Mammary epithelial cell (primary cell): ENCODE measurements at regions of chr2 and their contacts with region 1.

Region 1: DNA sequence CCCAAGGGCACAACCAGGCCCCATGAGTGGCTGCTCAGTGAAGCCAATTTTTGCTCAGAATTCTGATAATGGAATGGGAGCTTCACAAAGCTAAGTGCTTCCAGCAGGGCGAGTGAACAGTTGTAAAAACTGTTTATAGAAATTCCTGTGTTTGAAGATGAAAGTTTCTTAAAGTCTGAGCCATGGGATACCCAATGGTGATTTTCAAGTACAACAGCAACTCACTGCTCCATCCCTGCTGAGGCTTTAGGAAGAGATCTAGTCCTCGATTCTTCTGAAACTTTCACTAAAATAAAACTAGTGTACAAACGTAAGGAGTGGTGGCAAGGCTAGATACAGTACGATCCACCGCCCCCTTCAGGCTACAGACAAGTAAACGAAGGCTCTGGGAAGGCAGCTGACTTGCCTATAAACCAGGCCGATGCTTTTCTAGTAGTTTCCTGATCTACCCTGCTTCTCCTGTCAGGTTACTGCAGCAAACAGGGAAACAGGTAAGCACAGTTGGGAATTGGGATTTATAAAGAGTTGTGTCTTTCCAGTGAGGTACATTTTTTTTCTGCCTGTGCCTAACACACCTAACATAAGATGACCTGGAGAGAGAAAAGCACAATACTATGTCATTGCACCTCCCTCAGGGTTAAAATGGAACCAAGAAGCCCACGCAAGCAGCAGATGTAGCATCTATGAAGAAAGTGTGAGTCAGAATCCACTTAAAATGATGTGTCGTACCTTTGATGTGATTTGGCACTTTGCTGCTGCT is 108.7 kb downstream of the UXS1 start:
- DNase-seq: peak; percentile 25
- H3K4me3 ChIP-seq: no peak overlapping the region
- H3K27ac ChIP-seq: no peak overlapping the region
- H3K4me1 ChIP-seq: peaks cover 5% of the 10 kb centered on the region
- H3K27me3 ChIP-seq: no peaks in the 10 kb centered on the region
- CTCF ChIP-seq: peak in 1 of 2 donors; percentile 36

Region 2: DNA sequence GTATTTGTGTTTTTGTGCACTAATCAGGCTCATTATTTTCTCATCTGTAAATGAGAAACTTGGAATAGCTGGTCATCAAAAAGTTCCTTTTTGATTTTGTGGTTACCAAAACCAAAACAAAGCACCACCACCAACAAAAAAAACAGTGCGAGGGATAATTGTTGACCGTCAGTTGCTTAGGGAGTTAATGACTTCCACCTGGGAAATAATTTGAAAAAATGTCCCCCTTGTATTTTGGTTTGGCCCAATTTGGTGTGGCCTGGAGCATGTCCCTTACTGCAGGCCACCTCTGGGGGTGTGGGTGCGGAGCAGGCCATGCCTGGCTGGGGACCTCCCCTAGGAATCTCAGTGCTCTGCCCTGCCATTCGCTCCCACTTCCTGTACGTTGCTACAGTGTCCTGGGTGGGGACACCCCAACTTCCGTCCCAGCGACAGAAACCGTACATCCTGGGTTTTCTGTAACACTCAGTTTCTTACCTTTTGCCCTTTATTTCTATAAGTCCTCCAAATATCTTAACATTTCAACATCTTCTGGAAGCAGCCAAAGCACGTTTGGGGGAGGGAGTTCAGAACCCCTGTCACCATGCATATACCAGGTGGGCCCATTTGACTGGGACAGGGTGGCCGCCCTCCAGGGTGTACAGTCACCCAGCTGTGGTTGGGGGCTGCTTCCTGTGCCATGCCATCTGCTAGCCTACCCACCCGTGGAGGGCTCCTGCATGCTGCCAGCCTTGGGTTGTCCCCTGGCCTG is 309.4 kb before region 1 on chr2:
- CTCF ChIA-PET with region 1: no interaction called
- dilution Hi-C with region 1: no loop called
- in situ Hi-C with region 1: no loop called
- intact Hi-C with region 1: loop called (anchors 10 kb)
- DNase-seq: no peak
- H3K4me3 ChIP-seq: no peak overlapping the region
- H3K27ac ChIP-seq: no peak overlapping the region
- H3K4me1 ChIP-seq: peaks cover 4% of the 10 kb centered on the region
- H3K27me3 ChIP-seq: no peaks in the 10 kb centered on the region
- CTCF ChIP-seq: no peak

Region 3: DNA sequence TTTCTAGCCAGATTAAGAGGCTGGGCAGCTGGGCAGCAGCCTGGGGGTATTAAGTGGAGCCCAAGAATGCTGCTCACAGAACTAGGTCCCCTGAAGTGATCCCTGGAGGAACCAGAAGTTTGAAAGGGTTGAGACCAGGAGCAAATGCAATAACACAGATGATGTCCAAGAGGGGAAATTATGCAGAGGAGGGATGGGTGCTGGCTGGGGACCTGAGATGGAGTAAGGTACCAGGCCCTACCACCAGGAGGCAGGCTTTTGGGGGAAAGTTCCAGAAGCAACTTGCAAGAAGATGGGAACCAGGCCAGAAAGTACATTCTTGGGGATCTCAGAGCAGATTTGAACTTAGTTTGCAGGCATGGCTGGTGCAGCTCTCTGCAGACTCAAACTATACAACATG is 165.5 kb before region 1 on chr2:
- CTCF ChIA-PET with region 1: no interaction called
- dilution Hi-C with region 1: no loop called
- in situ Hi-C with region 1: no loop called
- intact Hi-C with region 1: loop called (anchors 10 kb)
- DNase-seq: peak; percentile 66
- H3K4me3 ChIP-seq: no peak overlapping the region
- H3K27ac ChIP-seq: peak overlapping the region; percentile 18
- H3K4me1 ChIP-seq: peaks cover 34% of the 10 kb centered on the region
- H3K27me3 ChIP-seq: no peaks in the 10 kb centered on the region
- CTCF ChIP-seq: peak; percentile 66 to 75